ENCODE measurements at regions of chr17 and their contacts with region 1.

Region 1: DNA sequence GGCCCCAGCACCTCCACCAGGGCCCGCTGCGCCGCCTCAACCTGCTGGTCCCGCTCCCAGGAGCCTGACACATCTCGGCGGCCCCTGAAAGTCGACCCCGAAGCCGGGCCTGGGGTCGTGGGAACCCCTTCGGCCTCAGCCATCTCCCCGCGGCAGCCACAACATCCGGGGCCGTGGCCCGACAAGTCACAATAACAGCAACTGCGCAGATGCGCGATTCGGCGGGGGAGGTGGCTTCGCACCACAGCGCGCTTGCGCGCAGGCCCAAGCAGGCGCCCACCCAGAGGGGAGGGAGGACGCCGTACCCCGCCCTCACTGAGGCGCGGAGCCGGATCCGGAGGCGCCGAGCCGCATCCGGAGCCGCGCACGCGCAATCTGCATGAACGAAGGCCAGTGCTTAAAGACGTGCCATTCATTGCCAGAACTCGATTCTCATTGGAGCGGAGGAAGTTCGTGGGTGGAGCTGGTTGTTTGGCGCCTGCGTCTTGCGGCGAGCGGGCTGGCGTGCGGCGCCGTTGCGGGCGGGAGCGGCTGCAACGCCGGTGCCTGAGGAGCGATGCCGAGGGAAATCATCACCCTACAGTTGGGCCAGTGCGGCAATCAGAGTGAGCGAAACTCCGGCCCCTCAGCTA is at the starts of genes RETREG3 and TUBG1:
- DNase-seq: peak; percentile 99
- total RNA-seq, gene RETREG3: 21.3 TPM
- total RNA-seq, gene TUBG1: 45.6 TPM

Region 2: GRCh38 chr17:42566883-42567573 is 42.3 kb before region 1 on chr17 and contains the start of gene MLX:
- intact Hi-C with region 1: loop called (anchors 5 kb)
- DNase-seq: peak; percentile 96
- total RNA-seq, gene MLX: 43.1 TPM

Region 3: GRCh38 chr17:42577532-42578281 is 31.6 kb before region 1 on chr17 and contains the start of gene PSMC3IP:
- intact Hi-C with region 1: loop called (anchors 2 kb)
- DNase-seq: peak; percentile 97
- total RNA-seq, gene PSMC3IP: 1.8 TPM

Region 4: DNA sequence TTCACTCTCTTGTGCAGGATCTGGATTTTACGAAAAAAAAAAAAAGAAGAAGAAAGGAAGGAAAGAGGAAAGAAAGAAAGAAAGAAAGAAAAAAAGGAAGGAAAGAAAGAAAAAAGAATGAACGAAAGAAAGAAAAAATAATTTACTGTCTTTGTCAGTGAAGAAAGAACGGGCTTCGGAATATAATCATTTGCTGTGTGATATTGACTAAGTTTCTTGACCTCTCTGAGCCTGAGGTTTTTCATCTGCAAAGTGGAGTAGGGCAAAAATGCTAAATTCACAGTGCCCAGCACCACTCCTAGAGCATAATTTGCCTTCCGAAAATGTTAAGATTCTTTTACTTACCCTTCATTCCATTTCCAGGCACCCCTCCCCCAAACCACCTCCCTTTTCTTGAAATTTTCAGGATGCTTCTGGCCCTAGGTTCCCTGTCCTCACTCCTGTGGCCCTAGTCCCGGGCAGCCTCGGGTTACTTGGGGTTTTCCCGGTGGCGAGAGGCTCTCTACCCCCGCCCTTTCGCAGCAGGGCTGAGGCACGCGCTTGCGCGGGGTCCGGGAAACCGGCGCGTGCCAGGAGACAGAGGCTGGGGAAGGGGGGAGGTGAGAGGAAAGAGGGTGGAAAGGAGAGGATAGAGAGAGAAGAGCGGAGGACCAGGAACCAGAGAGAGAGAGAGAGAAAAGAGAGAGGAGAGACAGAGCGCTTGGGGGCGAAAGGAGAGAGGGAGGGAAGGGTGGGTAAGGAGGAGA is 72.9 kb after region 1 on chr17 and contains the start of gene CNTNAP1:
- intact Hi-C with region 1: no loop called
- DNase-seq: no peak
- total RNA-seq, gene CNTNAP1: 7.0 TPM